CD4-positive, alpha-beta T cell (primary cell): ENCODE measurements at regions of chr12 and their contacts with region 1.

Region 1: DNA sequence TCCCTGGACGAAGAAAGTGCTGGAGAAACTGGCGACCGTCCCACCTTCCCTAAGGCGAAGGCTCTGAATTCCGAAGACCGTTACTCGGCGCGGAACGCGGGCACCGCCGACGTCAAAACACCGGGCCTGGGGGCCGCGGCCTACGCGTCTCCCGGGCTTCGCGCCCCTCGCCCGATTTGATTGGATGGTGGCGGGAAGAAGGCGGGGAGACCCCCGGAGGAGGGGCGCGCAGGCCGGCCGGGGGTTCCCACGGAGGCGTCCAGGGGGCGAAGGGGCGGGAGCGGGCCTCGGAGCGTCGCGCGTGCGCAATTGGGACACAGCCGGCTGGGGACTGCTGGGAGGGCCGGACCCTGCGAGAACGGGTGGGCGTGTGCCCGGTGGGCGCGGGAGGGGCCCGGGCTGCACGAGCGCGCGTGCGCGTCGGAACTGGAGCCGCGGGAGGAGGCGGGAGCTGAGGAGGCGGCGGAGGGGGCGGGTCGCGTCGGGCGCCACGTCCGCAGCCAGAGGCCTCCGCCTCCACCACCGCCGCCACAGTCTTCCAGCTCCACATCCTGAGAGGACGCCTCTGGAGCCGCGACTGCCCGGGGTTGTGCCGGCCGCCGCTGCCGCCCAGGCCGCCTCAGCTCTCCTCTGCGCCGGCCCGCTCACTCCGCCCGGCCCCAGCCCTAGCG is at the start of gene TMEM263:
- DNase-seq: peak; percentile 74 to 97 (median 88)
- ATAC-seq: peak; percentile 73
- H3K4me3 ChIP-seq: peak within 1 kb of the TSS; percentile 77
- H3K4me3 Mint-ChIP-seq: peak within 1 kb of the TSS; percentile 98
- H3K27ac ChIP-seq: peak within 1 kb of the TSS; percentile 81 to 89
- H3K27ac Mint-ChIP-seq: peak within 1 kb of the TSS; percentile 98
- H3K4me1 ChIP-seq: peaks cover 13% of the 10 kb centered on the region
- H3K4me1 Mint-ChIP-seq: peaks cover 43% of the 10 kb centered on the region
- H3K27me3 ChIP-seq: no peaks in the 10 kb centered on the region
- H3K27me3 Mint-ChIP-seq: no peaks in the 10 kb centered on the region
- CTCF ChIP-seq: no peak
- total RNA-seq, gene TMEM263: 33.2 to 33.4 TPM

Region 2: DNA sequence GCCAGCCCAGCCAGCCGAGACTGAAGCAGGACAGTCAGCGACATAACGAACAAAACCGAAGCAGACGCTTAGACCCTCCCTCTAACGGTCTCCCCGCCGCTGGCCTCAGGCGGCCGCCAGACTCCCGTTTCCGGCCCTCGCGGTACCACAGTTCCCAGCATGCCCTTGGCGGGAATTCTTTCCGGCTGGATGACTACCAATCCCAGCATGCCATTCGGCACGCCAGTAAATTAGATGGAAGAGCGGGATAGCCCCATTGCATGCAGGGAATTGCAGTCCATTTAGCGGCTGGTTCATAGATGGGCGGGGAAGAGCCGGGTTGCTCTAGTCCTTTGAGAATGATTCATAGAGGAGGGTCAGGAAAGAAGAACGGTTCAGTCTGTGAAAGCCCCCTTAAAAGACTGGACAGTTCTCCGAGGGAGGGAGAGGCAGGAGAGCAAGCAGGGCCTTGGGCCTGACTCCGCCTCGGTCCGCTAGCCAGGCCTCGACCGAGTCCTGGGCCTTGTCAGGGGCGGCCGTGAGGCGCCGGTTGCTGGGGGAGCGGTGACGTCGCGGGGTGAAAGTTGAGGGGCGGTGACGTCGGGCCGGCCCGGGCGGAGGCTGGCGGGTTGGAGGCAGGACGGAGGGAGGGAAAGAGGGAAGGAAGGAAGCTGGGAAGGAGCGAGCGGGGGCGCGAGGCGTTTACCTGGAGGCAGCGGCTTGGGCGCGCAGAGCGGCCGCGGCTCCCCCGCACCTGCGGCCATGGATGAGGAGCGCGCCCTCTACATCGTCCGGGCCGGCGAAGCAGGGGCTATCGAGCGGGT is 181.3 kb before region 1 on chr12 and contains the start of gene RIC8B:
- CTCF ChIA-PET with region 1: no interaction called
- POLR2A ChIA-PET with region 1: no interaction called
- intact Hi-C with region 1: loop called in 1 of 2 experiments (anchors 5 kb)
- DNase-seq: peak; percentile 51 to 91 (median 72)
- ATAC-seq: peak; percentile 82
- H3K4me3 ChIP-seq: peak within 1 kb of the TSS; percentile 89
- H3K4me3 Mint-ChIP-seq: peak within 1 kb of the TSS; percentile 98
- H3K27ac ChIP-seq: peak within 1 kb of the TSS; percentile 80 to 90
- H3K27ac Mint-ChIP-seq: peak within 1 kb of the TSS; percentile 97
- H3K4me1 ChIP-seq: peaks cover 31% of the 10 kb centered on the region
- H3K4me1 Mint-ChIP-seq: peaks cover 42% of the 10 kb centered on the region
- H3K27me3 ChIP-seq: no peaks in the 10 kb centered on the region
- H3K27me3 Mint-ChIP-seq: no peaks in the 10 kb centered on the region
- CTCF ChIP-seq: no peak
- total RNA-seq, gene RIC8B: 5.5 to 9.0 TPM

Region 3: GRCh38 chr12:106971065-106971464 is 15.6 kb after region 1 on chr12:
- CTCF ChIA-PET with region 1: interaction called, 5 read pairs
- POLR2A ChIA-PET with region 1: interaction called, 12 read pairs
- intact Hi-C with region 1: no loop called
- DNase-seq: no peak
- ATAC-seq: no peak
- H3K4me3 ChIP-seq: no peak overlapping the region
- H3K4me3 Mint-ChIP-seq: no peak overlapping the region
- H3K27ac ChIP-seq: no peak overlapping the region
- H3K27ac Mint-ChIP-seq: peak overlapping the region; percentile 79
- H3K4me1 ChIP-seq: no peaks in the 10 kb centered on the region
- H3K4me1 Mint-ChIP-seq: peaks cover 17% of the 10 kb centered on the region
- H3K27me3 ChIP-seq: no peaks in the 10 kb centered on the region
- H3K27me3 Mint-ChIP-seq: no peaks in the 10 kb centered on the region
- CTCF ChIP-seq: no peak

Region 4: GRCh38 chr12:106986625-106987430 is 31.3 kb after region 1 on chr12 and contains the start of gene MTERF2:
- CTCF ChIA-PET with region 1: interaction called, 5 read pairs
- POLR2A ChIA-PET with region 1: interaction called, 26 read pairs
- intact Hi-C with region 1: loop called (anchors 2 kb)
- DNase-seq: peak; percentile 61 to 91 (median 71)
- ATAC-seq: peak; percentile 94
- H3K4me3 ChIP-seq: peak within 1 kb of the TSS; percentile 87
- H3K4me3 Mint-ChIP-seq: peak within 1 kb of the TSS; percentile 97
- H3K27ac ChIP-seq: peak within 1 kb of the TSS in 1 of 2 donors; percentile 41
- H3K27ac Mint-ChIP-seq: peak within 1 kb of the TSS; percentile 78
- H3K4me1 ChIP-seq: peaks cover 27% of the 10 kb centered on the region
- H3K4me1 Mint-ChIP-seq: peaks cover 50% of the 10 kb centered on the region
- H3K27me3 ChIP-seq: no peaks in the 10 kb centered on the region
- H3K27me3 Mint-ChIP-seq: no peaks in the 10 kb centered on the region
- CTCF ChIP-seq: no peak
- total RNA-seq, gene MTERF2: 6.1 to 7.6 TPM

Region 5: DNA sequence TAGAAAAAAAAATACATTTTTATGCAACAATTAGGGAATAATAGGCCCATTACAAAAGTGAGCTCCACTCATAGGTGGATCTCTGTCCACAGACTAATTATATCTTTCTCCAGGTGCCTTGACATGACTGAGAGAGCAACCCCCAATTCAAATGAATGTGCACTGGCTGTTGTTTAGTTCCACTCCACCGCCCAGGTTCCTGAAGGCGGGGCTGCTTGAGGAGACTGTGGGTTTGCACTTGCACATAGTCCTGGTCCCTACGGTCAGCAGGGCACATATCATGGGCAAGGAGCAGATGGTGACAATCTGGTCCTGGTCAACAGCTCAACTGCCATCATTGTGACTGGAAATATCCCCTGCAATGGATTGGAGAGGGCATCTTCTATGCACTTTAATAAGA is 534.5 kb after region 1 on chr12:
- CTCF ChIA-PET with region 1: no interaction called
- POLR2A ChIA-PET with region 1: no interaction called
- intact Hi-C with region 1: no loop called
- DNase-seq: no peak
- ATAC-seq: no peak
- H3K4me3 ChIP-seq: no peak overlapping the region
- H3K4me3 Mint-ChIP-seq: no peak overlapping the region
- H3K27ac ChIP-seq: no peak overlapping the region
- H3K27ac Mint-ChIP-seq: no peak overlapping the region
- H3K4me1 ChIP-seq: peaks cover 37% of the 10 kb centered on the region
- H3K4me1 Mint-ChIP-seq: peaks cover 70% of the 10 kb centered on the region
- H3K27me3 ChIP-seq: no peaks in the 10 kb centered on the region
- H3K27me3 Mint-ChIP-seq: no peaks in the 10 kb centered on the region
- CTCF ChIP-seq: no peak